ENCODE measurements at regions of chr10 and their contacts with region 1.

Region 1: GRCh38 chr10:100912605-100913469 is at the start of gene SLF2:
- DNase-seq: peak; percentile 98
- H3K4me3 Mint-ChIP-seq: peak within 1 kb of the TSS; percentile 99
- H3K27ac Mint-ChIP-seq: peak within 1 kb of the TSS; percentile 98
- H3K4me1 Mint-ChIP-seq: peaks cover 40% of the 10 kb centered on the region
- H3K27me3 Mint-ChIP-seq: no peaks in the 10 kb centered on the region
- total RNA-seq, gene SLF2: 34.9 and 35.3 TPM in 2 replicates

Region 2: GRCh38 chr10:100346765-100347567 is 565.9 kb before region 1 on chr10 and contains the start of gene SCD:
- intact Hi-C with region 1: loop called (anchors 10 kb)
- DNase-seq: peak; percentile 97
- H3K4me3 Mint-ChIP-seq: peak within 1 kb of the TSS; percentile 97
- H3K27ac Mint-ChIP-seq: peak within 1 kb of the TSS; percentile 94
- H3K4me1 Mint-ChIP-seq: peaks cover 58% of the 10 kb centered on the region
- H3K27me3 Mint-ChIP-seq: no peaks in the 10 kb centered on the region
- total RNA-seq, gene SCD: 252 and 256 TPM in 2 replicates

Region 3: GRCh38 chr10:100847440-100847839 is 65.4 kb before region 1 on chr10:
- intact Hi-C with region 1: no loop called
- DNase-seq: peak; percentile 63
- H3K4me3 Mint-ChIP-seq: no peak overlapping the region
- H3K27ac Mint-ChIP-seq: peak overlapping the region; percentile 6
- H3K4me1 Mint-ChIP-seq: peaks cover 16% of the 10 kb centered on the region
- H3K27me3 Mint-ChIP-seq: peaks cover 35% of the 10 kb centered on the region

Region 4: GRCh38 chr10:100986952-100987750 is 74.3 kb after region 1 on chr10 and contains the starts of genes MRPL43 and TWNK:
- intact Hi-C with region 1: loop called (anchors 2 kb)
- DNase-seq: peak; percentile 96
- H3K4me3 Mint-ChIP-seq: peak within 1 kb of the TSS; percentile 95
- H3K27ac Mint-ChIP-seq: peak within 1 kb of the TSS; percentile 85
- H3K4me1 Mint-ChIP-seq: peaks cover 27% of the 10 kb centered on the region
- H3K27me3 Mint-ChIP-seq: no peaks in the 10 kb centered on the region
- total RNA-seq, gene MRPL43: 53.4 and 59.5 TPM in 2 replicates
- total RNA-seq, gene TWNK: 41.1 and 42.1 TPM in 2 replicates

Measured in activated CD4-positive, alpha-beta T cell treated with anti-CD3 and anti-CD28 coated beads, Interleukin-2, amount 10 ng/mL, durations not matched to agents 24 days and 14 days (primary cell).